GM13976 (cell line): ENCODE measurements at regions of chr10 and their contacts with region 1.

Region 1: DNA sequence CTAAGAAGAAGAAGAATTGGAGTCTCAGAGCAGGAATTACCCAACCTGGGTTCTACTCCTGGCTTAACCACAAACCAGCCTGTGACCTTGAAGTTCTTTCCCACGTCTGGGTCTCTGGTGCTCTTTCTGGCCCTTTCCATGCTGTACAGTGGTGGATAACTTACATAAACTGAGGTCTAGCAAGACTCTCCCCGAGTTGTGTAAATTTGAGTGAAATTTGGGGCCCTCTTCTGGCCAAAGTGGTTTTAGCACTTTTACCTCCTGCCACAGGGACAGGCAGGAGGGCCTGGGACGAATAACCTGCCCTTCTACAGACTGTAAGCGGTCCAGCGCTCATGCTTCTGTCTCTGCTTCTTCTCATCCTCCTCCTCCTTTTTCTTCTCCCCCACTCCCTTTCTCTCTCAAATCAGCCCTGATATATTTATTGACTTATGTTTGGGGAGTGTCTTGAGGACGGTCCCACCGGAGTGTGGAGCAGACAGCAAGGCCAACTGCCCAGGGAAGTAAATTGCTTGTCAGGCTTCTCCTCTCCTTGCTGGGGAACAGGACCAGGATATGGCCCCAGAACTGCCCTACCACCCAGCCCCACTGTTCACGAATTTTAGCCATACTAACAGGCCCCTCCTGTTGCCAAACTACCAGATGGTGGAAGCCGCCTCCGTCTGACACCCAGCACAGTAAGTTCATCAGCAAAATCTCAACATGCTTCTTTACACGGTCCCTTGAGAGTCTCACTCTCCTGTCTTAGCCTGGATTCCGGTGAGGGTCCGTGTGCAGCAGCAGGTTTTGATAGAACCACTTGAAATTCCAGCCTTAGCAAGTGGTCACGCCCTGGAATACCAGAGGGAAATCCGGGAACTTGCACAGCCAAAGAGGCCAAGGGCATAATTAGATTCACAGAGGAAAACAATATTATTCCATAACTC is 4.0 kb upstream of the SH3PXD2A start:
- DNase-seq: peak; percentile 63
- CTCF ChIP-seq: peak; percentile 74

Region 2: GRCh38 chr10:103712570-103713498 is 146.6 kb before region 1 on chr10:
- in situ Hi-C with region 1: loop called (anchors 10 kb)
- DNase-seq: peak; percentile 84
- CTCF ChIP-seq: peak; percentile 88